ENCODE measurements at regions of chr12 and their contacts with region 1.

Region 1: DNA sequence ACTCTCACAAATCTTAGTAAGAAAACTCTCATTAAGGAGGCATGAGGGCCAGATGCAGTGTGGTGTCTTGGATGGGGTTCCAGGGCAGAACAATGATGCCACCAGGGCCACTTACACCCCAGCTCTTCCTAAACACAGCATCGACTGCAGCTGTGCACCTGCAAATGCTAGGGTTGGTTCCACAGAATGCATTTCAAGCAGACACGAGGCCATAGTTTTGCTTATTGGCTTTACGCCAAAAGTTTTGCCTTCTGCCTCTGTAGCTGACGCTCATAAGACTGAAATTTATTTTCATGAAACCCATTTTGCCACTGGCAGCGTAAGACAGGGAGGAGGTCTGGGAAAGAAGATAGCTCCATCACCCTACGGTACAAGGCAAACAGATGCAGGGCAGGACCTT is 179.0 kb downstream of the RIMBP2 start:
- DNase-seq: no peak
- ATAC-seq: no peak
- H3K4me3 ChIP-seq: no peak overlapping the region
- H3K27ac ChIP-seq: no peak overlapping the region
- H3K4me1 ChIP-seq: no peaks in the 10 kb centered on the region
- H3K27me3 ChIP-seq: peaks cover 0 to 3% (median 0%) of the 10 kb centered on the region in 7 donors
- CTCF ChIP-seq: no peak

Region 2: DNA sequence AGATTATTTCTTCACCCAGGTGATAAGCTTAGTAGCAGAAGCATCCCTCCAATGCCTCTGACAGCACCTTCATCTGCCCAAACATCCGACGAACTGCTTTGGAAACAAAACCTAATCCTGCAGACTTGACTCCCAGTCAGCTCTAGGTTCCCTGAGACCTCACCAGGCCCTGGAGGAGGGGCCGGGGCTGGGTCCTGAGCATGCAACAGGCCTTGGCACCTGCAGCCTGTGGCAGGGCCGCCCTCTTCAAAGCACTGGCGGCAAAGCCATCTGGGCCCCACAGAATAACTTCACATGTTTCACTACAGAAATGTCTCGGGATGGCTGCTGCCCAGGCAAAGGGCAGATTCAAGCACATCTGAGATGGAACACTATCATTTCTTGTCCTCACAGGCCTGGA is 66.1 kb before region 1 on chr12:
- intact Hi-C with region 1: loop called in 1 of 10 experiments (anchors 2 kb)
- DNase-seq: no peak
- ATAC-seq: no peak
- H3K4me3 ChIP-seq: no peak overlapping the region
- H3K27ac ChIP-seq: no peak overlapping the region
- H3K4me1 ChIP-seq: no peaks in the 10 kb centered on the region
- H3K27me3 ChIP-seq: peaks cover 0 to 34% (median 14%) of the 10 kb centered on the region in 7 donors
- CTCF ChIP-seq: no peak

Region 3: DNA sequence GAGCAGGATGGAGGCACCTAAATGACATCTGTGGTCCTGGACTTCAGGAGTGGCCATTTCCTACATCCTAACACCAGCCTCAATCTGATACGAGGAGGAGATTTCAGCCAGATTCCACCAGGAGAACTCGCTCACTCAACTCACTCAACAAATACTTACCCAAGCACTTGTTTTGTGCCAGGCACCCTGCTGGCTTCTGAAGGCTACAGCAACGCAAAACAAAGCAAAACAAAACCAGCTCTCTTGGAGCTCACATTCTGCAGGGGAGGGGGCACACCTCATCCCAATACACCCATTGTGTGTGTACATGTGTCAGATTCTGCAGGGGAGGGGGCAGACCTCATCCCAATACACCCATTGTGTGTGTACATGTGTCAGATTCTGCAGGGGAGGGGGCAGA is 54.6 kb before region 1 on chr12:
- intact Hi-C with region 1: no loop called
- DNase-seq: no peak
- ATAC-seq: no peak
- H3K4me3 ChIP-seq: no peak overlapping the region
- H3K27ac ChIP-seq: no peak overlapping the region
- H3K4me1 ChIP-seq: no peaks in the 10 kb centered on the region
- H3K27me3 ChIP-seq: peaks cover 0 to 60% (median 41%) of the 10 kb centered on the region in 7 donors
- CTCF ChIP-seq: no peak